ENCODE measurements at regions of chr5 and their contacts with region 1.

Region 1: GRCh38 chr5:154072414-154073171 is 33.8 kb downstream of the MFAP3 start:
- DNase-seq: peak; percentile 56
- H3K4me3 ChIP-seq: no peak overlapping the region
- H3K27ac ChIP-seq: no peak overlapping the region
- H3K4me1 ChIP-seq: peaks cover 3% of the 10 kb centered on the region
- H3K27me3 ChIP-seq: no peaks in the 10 kb centered on the region
- CTCF ChIP-seq: peak; percentile 82 to 90

Region 2: DNA sequence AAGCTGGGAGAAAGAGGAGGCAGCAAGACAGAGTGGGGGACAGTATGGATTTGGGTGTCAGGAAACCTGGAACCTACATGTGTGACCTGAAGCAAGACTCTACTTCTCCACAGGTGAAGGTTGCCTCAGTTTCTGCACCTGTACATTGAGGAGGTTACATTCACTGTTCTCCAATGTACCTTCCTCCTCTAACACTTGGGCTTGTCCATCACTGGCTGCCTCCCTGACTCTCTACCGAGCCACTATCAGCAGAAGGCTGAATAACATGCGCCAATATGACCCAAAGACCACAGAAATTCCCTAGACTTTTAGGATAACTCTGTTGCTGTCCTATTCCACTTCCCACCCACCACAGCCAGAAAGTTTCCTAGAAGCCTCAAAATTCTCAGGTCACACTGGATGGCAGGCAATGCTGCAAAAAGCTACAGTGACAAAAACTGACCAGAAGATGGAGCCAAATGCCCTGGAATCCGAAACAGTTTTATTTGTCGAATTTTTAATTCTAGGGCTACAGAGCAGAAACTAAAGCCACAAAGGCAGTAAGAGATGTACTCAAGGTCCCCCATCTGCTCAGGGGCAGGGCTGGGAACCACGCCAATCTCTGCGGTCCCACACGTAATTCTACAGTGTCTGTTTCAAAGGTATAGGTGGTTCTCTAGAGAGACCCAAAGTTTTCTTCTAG is 98.3 kb before region 1 on chr5:
- CTCF ChIA-PET with region 1: no interaction called
- dilution Hi-C with region 1: no loop called
- in situ Hi-C with region 1: no loop called
- intact Hi-C with region 1: loop called (anchors 1 kb)
- DNase-seq: peak; percentile 25
- H3K4me3 ChIP-seq: no peak overlapping the region
- H3K27ac ChIP-seq: no peak overlapping the region
- H3K4me1 ChIP-seq: no peaks in the 10 kb centered on the region
- H3K27me3 ChIP-seq: no peaks in the 10 kb centered on the region
- CTCF ChIP-seq: peak; percentile 72 to 75

Region 3: DNA sequence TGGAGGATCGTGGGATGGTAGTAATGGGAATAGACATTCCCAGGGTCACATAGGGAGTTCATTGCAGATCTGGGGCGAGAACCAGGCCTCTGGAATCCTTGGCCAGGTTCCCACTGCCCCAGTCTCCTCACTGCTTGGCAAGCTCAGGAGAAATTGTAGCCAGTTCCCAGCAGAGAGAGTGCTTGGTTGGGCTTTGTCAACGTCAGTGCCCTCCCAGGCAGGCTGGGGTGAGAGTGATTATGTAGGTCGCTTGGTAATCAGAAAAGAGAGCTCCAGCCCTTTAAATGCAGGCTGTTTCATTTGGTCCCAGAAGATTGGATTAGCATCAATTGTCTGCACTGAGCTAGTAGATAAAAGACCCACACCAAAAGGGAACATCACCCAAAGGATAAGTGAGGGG is 66.1 kb after region 1 on chr5:
- CTCF ChIA-PET with region 1: no interaction called
- dilution Hi-C with region 1: no loop called
- in situ Hi-C with region 1: no loop called
- intact Hi-C with region 1: no loop called
- DNase-seq: no peak
- H3K4me3 ChIP-seq: no peak overlapping the region
- H3K27ac ChIP-seq: no peak overlapping the region
- H3K4me1 ChIP-seq: no peaks in the 10 kb centered on the region
- H3K27me3 ChIP-seq: no peaks in the 10 kb centered on the region
- CTCF ChIP-seq: no peak

Region 4: GRCh38 chr5:154410786-154411185 is 338.2 kb after region 1 on chr5:
- CTCF ChIA-PET with region 1: interaction called, 3 read pairs
- dilution Hi-C with region 1: no loop called
- in situ Hi-C with region 1: loop called (anchors 5 to 10 kb)
- intact Hi-C with region 1: loop called (anchors 1 kb)
- DNase-seq: no peak
- H3K4me3 ChIP-seq: no peak overlapping the region
- H3K27ac ChIP-seq: no peak overlapping the region
- H3K4me1 ChIP-seq: peaks cover 10% of the 10 kb centered on the region
- H3K27me3 ChIP-seq: no peaks in the 10 kb centered on the region
- CTCF ChIP-seq: no peak

Region 5: DNA sequence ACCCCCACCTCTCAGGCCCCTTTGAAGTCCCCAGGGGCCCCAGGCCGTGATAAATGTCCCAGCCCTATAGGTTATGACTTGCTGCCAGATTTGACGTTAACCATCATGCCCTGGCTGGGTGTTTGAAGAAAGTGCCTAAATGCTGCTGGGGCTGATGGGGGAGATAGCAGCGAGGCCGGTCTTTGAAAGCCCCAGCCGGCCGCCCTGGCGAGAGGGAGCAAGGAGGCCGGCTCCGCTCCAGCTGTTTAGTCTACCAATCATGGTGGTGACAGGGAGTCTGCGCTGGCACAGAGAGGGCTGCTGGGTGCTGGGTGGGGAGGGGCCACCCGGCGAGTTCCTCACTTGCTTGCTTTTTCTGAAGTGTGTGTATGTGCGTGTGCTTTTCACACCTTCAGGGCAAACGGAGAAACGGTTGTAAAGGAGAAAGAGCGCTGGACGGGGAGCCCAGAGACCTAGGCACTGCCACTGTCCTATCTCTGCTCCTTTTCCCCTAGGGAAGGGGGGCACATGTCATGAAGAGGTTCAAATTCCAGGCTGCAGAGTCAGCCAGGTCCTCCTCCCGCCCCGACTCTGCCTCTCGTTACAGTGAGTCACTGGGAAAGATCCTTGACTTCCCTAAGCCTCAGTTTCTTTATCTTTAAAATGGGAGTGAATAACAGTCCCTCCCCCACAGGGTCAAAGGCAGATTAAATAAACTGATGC is 531.5 kb after region 1 on chr5:
- CTCF ChIA-PET with region 1: no interaction called
- dilution Hi-C with region 1: no loop called
- in situ Hi-C with region 1: loop called (anchors 10 to 25 kb)
- intact Hi-C with region 1: no loop called
- DNase-seq: no peak
- H3K4me3 ChIP-seq: no peak overlapping the region
- H3K27ac ChIP-seq: no peak overlapping the region
- H3K4me1 ChIP-seq: peaks cover 8% of the 10 kb centered on the region
- H3K27me3 ChIP-seq: no peaks in the 10 kb centered on the region
- CTCF ChIP-seq: no peak